B cell (primary cell): ENCODE measurements at regions of chr1 and their contacts with region 1.

Region 1: GRCh38 chr1:28886731-28887418 is 27.5 kb upstream of the EPB41 start:
- DNase-seq: peak; percentile 94
- ATAC-seq: peak; percentile 73
- H3K4me3 ChIP-seq: peak overlapping the region; percentile 76 to 93 (median 82)
- H3K4me3 Mint-ChIP-seq: peak overlapping the region; percentile 92
- H3K27ac ChIP-seq: peak overlapping the region; percentile 56 to 97
- H3K27ac Mint-ChIP-seq: peak overlapping the region; percentile 95
- H3K4me1 ChIP-seq: peaks cover 26 to 54% of the 10 kb centered on the region in 2 donors
- H3K4me1 Mint-ChIP-seq: peaks cover 63% of the 10 kb centered on the region
- H3K27me3 ChIP-seq: no peaks in the 10 kb centered on the region
- H3K27me3 Mint-ChIP-seq: no peaks in the 10 kb centered on the region
- CTCF ChIP-seq: no peak

Region 2: GRCh38 chr1:28078680-28079626 is 807.9 kb before region 1 on chr1:
- CTCF ChIA-PET with region 1: no interaction called
- POLR2A ChIA-PET with region 1: no interaction called
- intact Hi-C with region 1: no loop called
- DNase-seq: no peak
- ATAC-seq: no peak
- H3K4me3 ChIP-seq: no peak overlapping the region
- H3K4me3 Mint-ChIP-seq: no peak overlapping the region
- H3K27ac ChIP-seq: no peak overlapping the region
- H3K27ac Mint-ChIP-seq: peak overlapping the region; percentile 65
- H3K4me1 ChIP-seq: peaks cover 0 to 4% of the 10 kb centered on the region in 2 donors
- H3K4me1 Mint-ChIP-seq: peaks cover 28% of the 10 kb centered on the region
- H3K27me3 ChIP-seq: no peaks in the 10 kb centered on the region
- H3K27me3 Mint-ChIP-seq: no peaks in the 10 kb centered on the region
- CTCF ChIP-seq: no peak

Region 3: GRCh38 chr1:28259307-28260167 is 627.3 kb before region 1 on chr1 and contains the start of gene SESN2:
- CTCF ChIA-PET with region 1: no interaction called
- POLR2A ChIA-PET with region 1: no interaction called
- intact Hi-C with region 1: loop called (anchors 10 kb)
- DNase-seq: peak; percentile 98
- ATAC-seq: peak; percentile 99
- H3K4me3 ChIP-seq: peak within 1 kb of the TSS; percentile 65 to 96 (median 92)
- H3K4me3 Mint-ChIP-seq: peak within 1 kb of the TSS; percentile 84
- H3K27ac ChIP-seq: peak within 1 kb of the TSS in 1 of 2 donors; percentile 64
- H3K27ac Mint-ChIP-seq: peak within 1 kb of the TSS; percentile 75
- H3K4me1 ChIP-seq: peaks cover 22% of the 10 kb centered on the region in 2 donors
- H3K4me1 Mint-ChIP-seq: peaks cover 19% of the 10 kb centered on the region
- H3K27me3 ChIP-seq: peaks cover 0 to 4% (median 1%) of the 10 kb centered on the region in 4 experiments
- H3K27me3 Mint-ChIP-seq: peaks cover 16% of the 10 kb centered on the region
- CTCF ChIP-seq: no peak
- total RNA-seq, gene SESN2: 4.5 and 4.8 TPM in 2 replicates

Region 4: GRCh38 chr1:28663871-28664470 is 222.9 kb before region 1 on chr1:
- CTCF ChIA-PET with region 1: no interaction called
- POLR2A ChIA-PET with region 1: no interaction called
- intact Hi-C with region 1: no loop called
- DNase-seq: no peak
- ATAC-seq: no peak
- H3K4me3 ChIP-seq: no peak overlapping the region
- H3K4me3 Mint-ChIP-seq: no peak overlapping the region
- H3K27ac ChIP-seq: no peak overlapping the region
- H3K27ac Mint-ChIP-seq: no peak overlapping the region
- H3K4me1 ChIP-seq: peaks cover 5 to 11% of the 10 kb centered on the region in 2 donors
- H3K4me1 Mint-ChIP-seq: peaks cover 8% of the 10 kb centered on the region
- H3K27me3 ChIP-seq: no peaks in the 10 kb centered on the region
- H3K27me3 Mint-ChIP-seq: no peaks in the 10 kb centered on the region
- CTCF ChIP-seq: no peak

Region 5: GRCh38 chr1:28914228-28915030 is 27.6 kb after region 1 on chr1 and contains the start of gene EPB41:
- CTCF ChIA-PET with region 1: interaction called, 12 read pairs
- POLR2A ChIA-PET with region 1: interaction called, 15 read pairs
- intact Hi-C with region 1: loop called (anchors 1 kb)
- DNase-seq: peak; percentile 93
- ATAC-seq: peak; percentile 92
- H3K4me3 ChIP-seq: peak within 1 kb of the TSS; percentile 58 to 87 (median 80)
- H3K4me3 Mint-ChIP-seq: peak within 1 kb of the TSS; percentile 99
- H3K27ac ChIP-seq: peak within 1 kb of the TSS; percentile 37 to 74
- H3K27ac Mint-ChIP-seq: peak within 1 kb of the TSS; percentile 94
- H3K4me1 ChIP-seq: peaks cover 19 to 27% of the 10 kb centered on the region in 2 donors
- H3K4me1 Mint-ChIP-seq: peaks cover 45% of the 10 kb centered on the region
- H3K27me3 ChIP-seq: no peaks in the 10 kb centered on the region
- H3K27me3 Mint-ChIP-seq: no peaks in the 10 kb centered on the region
- CTCF ChIP-seq: no peak
- total RNA-seq, gene EPB41: 186 and 203 TPM in 2 replicates

Region 6: GRCh38 chr1:29022620-29023019 is 135.7 kb after region 1 on chr1:
- CTCF ChIA-PET with region 1: interaction called, 22 read pairs
- POLR2A ChIA-PET with region 1: interaction called, 3 read pairs
- intact Hi-C with region 1: no loop called
- DNase-seq: no peak
- ATAC-seq: no peak
- H3K4me3 ChIP-seq: no peak overlapping the region
- H3K4me3 Mint-ChIP-seq: no peak overlapping the region
- H3K27ac ChIP-seq: no peak overlapping the region
- H3K27ac Mint-ChIP-seq: no peak overlapping the region
- H3K4me1 ChIP-seq: no peaks in the 10 kb centered on the region
- H3K4me1 Mint-ChIP-seq: no peaks in the 10 kb centered on the region
- H3K27me3 ChIP-seq: no peaks in the 10 kb centered on the region
- H3K27me3 Mint-ChIP-seq: no peaks in the 10 kb centered on the region
- CTCF ChIP-seq: no peak

Region 7: GRCh38 chr1:29050166-29050565 is 163.3 kb after region 1 on chr1:
- CTCF ChIA-PET with region 1: interaction called, 13 read pairs
- POLR2A ChIA-PET with region 1: interaction called, 3 read pairs
- intact Hi-C with region 1: no loop called
- DNase-seq: no peak
- ATAC-seq: no peak
- H3K4me3 ChIP-seq: no peak overlapping the region
- H3K4me3 Mint-ChIP-seq: no peak overlapping the region
- H3K27ac ChIP-seq: no peak overlapping the region
- H3K27ac Mint-ChIP-seq: no peak overlapping the region
- H3K4me1 ChIP-seq: no peaks in the 10 kb centered on the region
- H3K4me1 Mint-ChIP-seq: no peaks in the 10 kb centered on the region
- H3K27me3 ChIP-seq: no peaks in the 10 kb centered on the region
- H3K27me3 Mint-ChIP-seq: no peaks in the 10 kb centered on the region
- CTCF ChIP-seq: no peak

Region 8: DNA sequence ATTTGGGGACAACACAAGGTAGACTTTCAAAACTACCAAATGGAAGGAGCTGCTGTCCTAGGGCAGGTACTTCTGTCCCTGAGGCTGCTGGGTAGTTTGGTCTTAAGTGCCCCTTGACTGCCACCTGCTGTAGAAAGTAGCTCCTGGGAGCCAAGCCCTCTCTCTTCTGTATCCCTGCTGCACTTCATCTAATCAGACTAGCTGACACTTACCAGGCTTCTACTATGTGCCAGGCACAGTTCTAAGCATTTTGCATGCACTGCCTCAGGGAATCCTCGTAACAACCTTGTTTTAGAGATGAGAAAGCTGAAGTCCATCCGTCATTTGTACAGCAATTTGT is 310.7 kb after region 1 on chr1:
- CTCF ChIA-PET with region 1: interaction called, 112 read pairs
- POLR2A ChIA-PET with region 1: no interaction called
- intact Hi-C with region 1: no loop called
- DNase-seq: peak; percentile 42
- ATAC-seq: peak; percentile 73
- H3K4me3 ChIP-seq: no peak overlapping the region
- H3K4me3 Mint-ChIP-seq: no peak overlapping the region
- H3K27ac ChIP-seq: no peak overlapping the region
- H3K27ac Mint-ChIP-seq: no peak overlapping the region
- H3K4me1 ChIP-seq: peaks cover 0 to under 1% of the 10 kb centered on the region in 2 donors
- H3K4me1 Mint-ChIP-seq: no peaks in the 10 kb centered on the region
- H3K27me3 ChIP-seq: no peaks in the 10 kb centered on the region
- H3K27me3 Mint-ChIP-seq: no peaks in the 10 kb centered on the region
- CTCF ChIP-seq: peak; percentile 28